Common myeloid progenitor, CD34-positive (primary cell): ENCODE measurements at regions of chr14 and their contacts with region 1.

Region 1: GRCh38 chr14:30214461-30215090 is 286.9 kb upstream of the PRKD1 start:
- DNase-seq: peak; percentile 45 to 74 (median 70)
- H3K4me3 ChIP-seq: no peak overlapping the region
- H3K27ac ChIP-seq: no peak overlapping the region
- H3K4me1 ChIP-seq: no peaks in the 10 kb centered on the region
- H3K27me3 ChIP-seq: peaks cover 0 to 3% (median 0%) of the 10 kb centered on the region in 5 experiments

Region 2: DNA sequence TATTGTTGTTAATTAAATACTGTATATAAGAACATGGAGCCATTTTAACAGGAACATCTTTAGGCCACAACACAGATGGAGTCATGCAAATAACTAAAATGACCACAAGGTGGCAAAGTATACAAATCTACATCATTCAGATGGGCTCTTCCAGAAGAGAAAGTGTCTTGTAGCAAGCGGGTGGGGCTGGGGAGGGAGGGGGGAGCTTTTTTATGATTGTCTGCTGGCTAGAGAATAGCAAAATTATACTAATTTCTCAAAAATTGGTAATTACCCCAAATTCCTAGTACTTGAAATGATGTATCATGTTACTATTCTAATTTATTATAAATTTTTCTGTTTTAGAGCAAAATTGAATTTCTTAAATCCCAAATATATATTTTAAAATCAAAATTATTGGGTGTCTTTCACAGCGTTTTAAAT is 665.6 kb before region 1 on chr14:
- CTCF ChIA-PET with region 1: interaction called, 32 read pairs
- POLR2A ChIA-PET with region 1: no interaction called
- DNase-seq: peak; percentile 45 to 69 (median 67)
- H3K4me3 ChIP-seq: no peak overlapping the region
- H3K27ac ChIP-seq: no peak overlapping the region
- H3K4me1 ChIP-seq: no peaks in the 10 kb centered on the region
- H3K27me3 ChIP-seq: no peaks in the 10 kb centered on the region